ENCODE measurements at regions of chr19 and their contacts with region 1.

Region 1: DNA sequence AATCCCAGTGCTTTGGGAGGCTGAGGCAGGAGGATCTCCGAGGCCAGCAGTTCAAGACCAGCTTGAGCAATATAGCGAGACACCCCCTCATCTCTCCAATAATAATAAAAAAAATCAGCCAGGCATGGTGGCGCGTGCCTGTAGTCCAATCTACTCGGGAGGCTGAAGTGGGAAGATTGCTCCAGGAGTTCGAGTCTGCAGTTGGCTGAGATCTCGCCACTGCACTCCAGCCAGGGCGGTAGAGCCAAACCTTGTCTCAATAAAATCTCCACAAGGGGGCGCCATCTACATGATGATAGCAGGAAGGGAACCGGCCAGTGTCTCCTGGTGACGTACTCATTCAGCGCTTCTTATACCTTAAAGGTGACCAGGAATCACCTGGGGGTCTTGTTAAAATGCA is 13.6 kb upstream of the C5AR1 start:
- DNase-seq: peak in 7 of 10 donors; percentile 56 to 91 (median 70)

Region 2: DNA sequence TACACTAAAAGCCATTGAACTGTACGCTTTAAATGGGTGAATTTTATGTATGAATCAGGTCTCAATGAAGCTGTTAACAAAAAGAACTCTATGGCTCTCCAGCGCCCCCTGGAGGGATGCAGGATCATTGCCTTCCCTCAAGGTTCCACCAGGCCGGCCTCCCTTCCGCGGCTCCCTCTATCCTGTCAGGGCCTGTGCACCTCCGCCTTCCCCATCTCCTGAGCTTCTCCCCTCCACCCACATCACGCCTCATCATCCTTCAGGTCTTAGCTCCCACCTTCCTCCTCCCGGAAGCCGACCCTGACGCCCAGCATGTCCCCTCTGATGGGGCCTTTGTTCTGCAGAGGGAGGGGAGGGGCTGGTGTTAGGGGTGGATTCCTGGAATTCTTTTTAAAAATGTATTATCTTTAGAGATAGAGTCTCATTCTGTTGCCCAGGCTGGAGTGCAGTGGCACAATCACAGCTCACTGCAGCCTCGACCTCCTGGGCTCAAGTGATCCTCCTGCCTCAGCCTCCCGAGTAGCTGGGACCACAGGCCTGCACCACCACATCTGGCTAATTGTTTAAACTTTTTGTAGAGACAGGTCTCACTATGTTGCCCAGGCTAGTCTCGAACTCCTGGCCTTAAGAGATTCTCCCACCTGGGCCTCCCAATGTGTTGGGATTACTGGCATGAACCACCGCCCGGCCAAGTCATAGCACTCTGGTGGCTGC is 95.6 kb after region 1 on chr19:
- intact Hi-C with region 1: loop called (anchors 1 kb)
- DNase-seq: peak; percentile 54 to 95 (median 81)

Region 3: DNA sequence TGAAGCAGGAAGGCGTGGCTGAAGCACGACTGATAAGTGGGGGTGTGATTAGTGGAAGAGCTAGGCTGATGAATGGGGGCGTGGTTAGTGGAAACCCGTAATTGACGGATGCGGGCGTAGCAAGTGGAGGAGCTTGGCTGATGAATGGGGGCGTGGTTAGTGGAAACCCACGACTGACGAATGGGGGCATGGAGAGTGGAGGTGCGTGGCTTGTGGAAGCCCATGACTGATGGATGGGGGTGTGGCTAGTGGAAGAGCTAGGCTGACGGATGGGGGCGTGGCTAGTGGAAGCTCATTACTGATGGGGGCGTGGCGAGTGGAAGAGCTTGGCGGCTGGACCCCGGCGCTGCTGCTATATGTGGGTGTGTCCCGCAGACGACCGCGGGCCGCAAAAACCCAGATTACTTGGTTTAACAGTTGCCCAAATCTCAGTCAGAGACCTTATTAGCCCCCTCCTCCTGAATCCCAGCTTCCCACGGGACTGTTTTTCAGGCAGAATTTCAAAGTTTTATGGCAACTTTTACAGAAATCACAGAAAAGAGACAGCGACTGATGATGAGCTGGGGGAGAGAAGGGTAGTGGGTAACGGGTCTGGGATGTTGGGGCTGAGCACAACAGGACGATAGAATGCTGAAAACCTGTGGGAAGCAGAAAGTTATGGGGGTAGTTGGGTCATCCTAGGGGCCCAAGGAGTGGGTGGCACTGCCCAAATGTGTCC is 132.3 kb after region 1 on chr19:
- intact Hi-C with region 1: loop called (anchors 10 kb)
- DNase-seq: peak; percentile 66 to 98 (median 84)